Left lung (tissue), 14 donors: ENCODE measurements at regions of chr1 and their contacts with region 1.

Region 1: DNA sequence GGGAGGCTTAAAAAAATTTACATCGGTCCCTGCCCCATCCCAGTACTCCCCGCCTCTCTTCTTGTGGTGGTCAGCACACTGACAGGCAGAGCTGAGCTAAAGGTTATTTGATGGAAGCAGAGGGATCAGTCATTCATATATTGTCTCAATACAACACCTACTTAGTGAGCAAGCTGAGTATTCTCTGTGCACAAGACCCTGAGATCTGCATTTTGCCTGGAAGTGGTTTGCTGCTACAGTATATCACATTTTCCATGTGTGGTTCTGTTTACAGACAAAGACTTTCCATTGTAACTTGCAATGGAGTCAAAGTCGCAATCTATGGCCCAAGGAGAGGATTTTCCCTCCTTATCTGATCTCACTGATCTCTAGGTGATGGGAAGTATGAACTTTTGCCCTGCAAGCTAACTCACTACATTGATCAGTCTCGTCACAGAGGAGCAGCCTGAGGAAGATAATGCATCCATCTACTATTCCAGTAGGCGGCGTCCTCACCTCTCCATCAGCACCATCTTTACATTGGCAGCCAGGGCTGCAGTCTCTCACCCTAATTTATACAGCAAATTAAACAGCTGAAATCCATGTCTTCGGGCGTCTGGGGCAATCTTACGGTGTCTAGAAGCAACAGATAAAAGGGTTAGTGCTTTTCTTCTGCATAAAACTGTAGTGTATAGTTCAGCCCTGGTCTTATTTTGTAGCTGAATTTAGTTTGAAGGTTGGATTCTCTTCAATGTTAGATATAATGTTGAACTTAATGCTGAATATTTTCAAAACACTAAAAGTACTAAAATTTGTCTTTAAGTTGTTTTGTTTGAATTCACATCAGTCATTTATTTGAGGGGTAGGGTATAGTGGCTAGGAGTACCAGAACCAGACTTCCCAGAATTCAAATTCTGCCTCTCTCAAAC is 3.2 kb upstream of the TRAF5 start:
- DNase-seq: peak in 2 of 4 donors; percentile 35 to 62
- ATAC-seq: peak; percentile 79
- H3K4me3 ChIP-seq: no peak overlapping the region
- H3K27ac ChIP-seq: no peak overlapping the region
- H3K4me1 ChIP-seq: peaks cover 4 to 17% of the 10 kb centered on the region in 2 donors
- H3K27me3 ChIP-seq: peaks cover 0 to 9% of the 10 kb centered on the region in 2 donors
- CTCF ChIP-seq: peak; percentile 66 to 67

Region 2: DNA sequence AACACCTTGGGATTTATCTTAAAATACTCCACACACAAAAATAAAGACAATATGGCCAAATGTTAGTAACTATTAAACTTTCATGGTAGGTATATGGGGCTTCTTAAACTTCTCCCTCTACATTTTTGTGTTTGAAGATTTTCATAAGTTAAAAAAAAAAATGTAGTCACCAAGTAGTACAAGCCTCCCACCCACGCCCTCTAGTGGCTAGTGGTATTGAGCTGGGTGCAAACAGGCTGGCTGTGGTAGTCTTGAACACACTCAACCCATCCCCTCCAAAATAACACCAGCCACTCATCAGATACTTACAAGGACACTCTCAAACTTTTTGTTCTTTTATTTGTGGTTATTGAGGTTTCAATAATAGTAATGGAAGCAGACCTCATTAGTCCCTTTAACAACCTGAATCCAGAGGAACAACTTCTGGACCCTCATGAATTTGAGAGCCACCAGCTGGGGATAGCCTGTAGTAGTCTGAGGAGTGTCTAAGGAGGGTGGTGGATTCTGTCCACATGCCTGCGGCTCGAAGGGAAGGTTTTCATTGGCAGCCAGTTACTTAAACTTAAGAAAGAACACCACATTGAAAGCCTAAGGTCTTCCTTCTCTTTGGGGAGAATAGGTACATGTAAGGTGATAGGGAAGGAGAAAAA is 152.9 kb after region 1 on chr1:
- intact Hi-C with region 1: loop called in 1 of 2 experiments (anchors 10 kb)
- DNase-seq: peak in 2 of 4 donors; percentile 66 to 73
- ATAC-seq: peak; percentile 90
- H3K4me3 ChIP-seq: no peak overlapping the region
- H3K27ac ChIP-seq: no peak overlapping the region
- H3K4me1 ChIP-seq: no peaks in the 10 kb centered on the region
- H3K27me3 ChIP-seq: peaks cover 13 to 38% of the 10 kb centered on the region in 2 donors
- CTCF ChIP-seq: peak; percentile 80 to 84

Region 3: DNA sequence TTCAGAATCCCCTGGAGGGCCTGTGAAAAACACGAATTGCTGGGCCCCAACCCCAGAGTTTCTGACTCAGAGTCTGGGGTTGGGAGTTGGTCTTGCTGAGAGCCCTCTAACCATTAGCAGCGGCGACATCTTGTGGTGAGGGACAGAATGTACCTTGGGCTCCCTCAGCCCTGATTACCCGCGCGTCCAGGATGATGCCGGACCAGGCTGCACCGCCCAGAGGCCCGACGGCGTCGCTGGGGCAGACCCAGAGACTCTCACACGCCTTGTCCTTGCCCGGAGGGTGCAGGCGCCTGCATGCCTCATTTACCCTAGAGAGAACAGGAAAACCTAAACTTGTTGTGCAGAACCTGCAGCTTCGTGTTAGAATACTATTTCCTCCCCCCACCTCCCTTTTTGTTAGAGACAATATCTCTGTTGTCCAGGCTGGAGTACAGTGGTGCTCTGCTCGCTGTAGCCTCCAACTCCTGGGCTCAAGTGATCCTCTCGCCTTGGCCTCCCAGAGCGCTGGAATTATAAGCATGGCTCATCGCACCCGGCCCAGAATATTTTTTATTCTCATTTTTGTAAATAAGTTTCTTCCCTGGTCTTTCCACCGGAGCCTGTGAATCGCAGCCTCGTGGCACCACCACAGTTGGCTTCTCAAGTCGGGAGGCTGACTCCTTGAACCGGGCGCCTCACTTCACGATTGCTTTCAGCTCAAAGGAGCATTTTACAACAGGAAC is 190.8 kb after region 1 on chr1:
- intact Hi-C with region 1: loop called in 1 of 2 experiments (anchors 10 kb)
- DNase-seq: peak; percentile 57 to 87 (median 84)
- ATAC-seq: peak; percentile 91
- H3K4me3 ChIP-seq: no peak overlapping the region
- H3K27ac ChIP-seq: no peak overlapping the region
- H3K4me1 ChIP-seq: peaks cover 0 to 22% of the 10 kb centered on the region in 2 donors
- H3K27me3 ChIP-seq: peaks cover 0 to 30% of the 10 kb centered on the region in 2 donors
- CTCF ChIP-seq: peak; percentile 59 to 69